ENCODE measurements at regions of chr22 and their contacts with region 1.

Region 1: GRCh38 chr22:38872172-38872830 is at the start of gene CBX6:
- DNase-seq: peak; percentile 96
- H3K4me3 ChIP-seq: peak within 1 kb of the TSS; percentile 87 to 91
- H3K27ac ChIP-seq: peak within 1 kb of the TSS; percentile 93 to 96
- H3K4me1 ChIP-seq: peaks cover 24% of the 10 kb centered on the region
- H3K27me3 ChIP-seq: no peaks in the 10 kb centered on the region
- CTCF ChIP-seq: peak in 1 of 3 experiments; percentile 38
- POLR2A ChIP-seq: no peak
- total RNA-seq, gene CBX6: 30.1 to 33.1 TPM

Region 2: DNA sequence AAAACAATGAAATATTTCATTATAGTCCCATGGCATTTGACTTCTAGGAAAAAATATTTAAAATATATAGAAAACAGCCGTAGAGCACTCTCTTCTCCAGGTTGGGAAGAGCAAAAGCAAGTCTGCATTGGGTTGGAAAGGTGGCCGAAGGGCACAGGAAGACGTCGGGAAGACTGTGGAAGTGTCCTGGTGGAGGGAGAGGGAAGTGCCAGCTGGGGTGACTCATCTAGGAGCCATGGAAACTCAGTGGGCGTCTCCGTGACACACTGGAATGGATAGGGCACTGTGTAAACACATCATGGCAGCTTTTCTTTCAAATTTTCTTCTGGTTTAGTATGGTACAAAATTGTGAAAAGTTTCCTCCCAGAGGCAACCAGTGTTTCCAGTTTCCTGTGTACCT is 153.9 kb before region 1 on chr22:
- intact Hi-C with region 1: no loop called
- DNase-seq: no peak
- H3K4me3 ChIP-seq: no peak overlapping the region
- H3K27ac ChIP-seq: no peak overlapping the region
- H3K4me1 ChIP-seq: peaks cover 32% of the 10 kb centered on the region
- H3K27me3 ChIP-seq: no peaks in the 10 kb centered on the region
- CTCF ChIP-seq: peak in 1 of 3 experiments; percentile 35
- POLR2A ChIP-seq: no peak

Region 3: GRCh38 chr22:38793721-38794466 is 78.4 kb before region 1 on chr22 and contains the start of gene DNAL4:
- intact Hi-C with region 1: no loop called
- DNase-seq: peak; percentile 99
- H3K4me3 ChIP-seq: peak within 1 kb of the TSS; percentile 84 to 96
- H3K27ac ChIP-seq: peak within 1 kb of the TSS; percentile 28 to 90
- H3K4me1 ChIP-seq: peaks cover 17% of the 10 kb centered on the region
- H3K27me3 ChIP-seq: no peaks in the 10 kb centered on the region
- CTCF ChIP-seq: no peak
- POLR2A ChIP-seq: no peak
- total RNA-seq, gene DNAL4: 54.4 to 76.8 TPM

Region 4: GRCh38 chr22:38927033-38927781 is 54.9 kb after region 1 on chr22:
- intact Hi-C with region 1: loop called (anchors 10 kb)
- DNase-seq: peak; percentile 82
- H3K4me3 ChIP-seq: peak overlapping the region in 1 of 2 donors; percentile 46
- H3K27ac ChIP-seq: no peak overlapping the region
- H3K4me1 ChIP-seq: peaks cover 14% of the 10 kb centered on the region
- H3K27me3 ChIP-seq: no peaks in the 10 kb centered on the region
- CTCF ChIP-seq: peak; percentile 32 to 54 (median 36)
- POLR2A ChIP-seq: no peak